Right ventricle myocardium inferior (tissue), 1 donor: ENCODE measurements at regions of chr1 and their contacts with region 1.

Region 1: DNA sequence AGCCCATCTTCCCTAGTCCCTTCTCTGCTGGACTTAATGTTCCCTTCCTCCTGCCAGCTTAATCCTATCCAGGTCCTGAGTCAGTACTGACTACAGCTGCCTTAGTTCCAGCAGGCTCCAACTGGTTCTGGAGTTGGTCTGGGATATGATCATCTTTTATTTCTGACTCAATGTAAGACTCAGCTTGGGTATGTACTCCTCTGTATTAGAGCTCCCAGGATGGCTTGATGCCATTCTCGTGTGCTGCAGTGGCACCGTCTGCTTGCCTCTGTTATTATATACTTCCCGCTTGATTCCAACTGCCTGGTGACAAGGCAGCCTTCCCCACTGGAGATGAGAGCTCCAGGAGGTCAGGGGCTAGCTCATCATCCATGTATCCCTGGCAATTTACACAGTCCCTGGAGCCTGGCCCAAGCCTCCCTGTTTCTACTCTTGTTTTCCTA is 164.4 kb upstream of the DPT start:
- DNase-seq: peak; percentile 67
- ATAC-seq: peak; percentile 97

Region 2: DNA sequence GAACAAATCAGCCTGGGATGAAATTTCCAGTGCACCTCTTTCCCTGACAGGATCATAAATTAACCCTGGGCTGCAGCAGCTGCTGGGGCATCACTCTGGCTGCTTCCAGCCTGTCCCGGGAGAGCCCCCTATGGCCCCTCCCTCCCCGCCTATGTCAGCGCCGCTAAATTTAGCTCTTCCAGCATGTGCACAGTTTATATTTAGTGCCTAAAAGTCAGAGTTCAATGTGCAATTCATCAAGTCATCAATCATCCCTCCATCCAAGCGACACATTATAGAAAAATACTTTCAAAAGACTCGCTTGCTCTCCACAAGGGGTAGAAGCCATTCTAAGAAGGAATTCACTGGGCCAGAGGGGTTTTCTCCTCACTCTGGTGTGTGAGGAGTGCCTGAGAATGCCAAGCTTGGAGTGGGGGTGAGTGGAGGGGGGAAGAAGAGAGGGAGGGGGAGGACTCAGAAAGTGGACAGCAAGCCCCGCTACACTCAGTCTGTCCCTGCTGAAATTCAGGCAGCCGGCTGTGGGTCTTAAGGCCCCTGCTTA is 279.6 kb before region 1 on chr1:
- intact Hi-C with region 1: no loop called
- DNase-seq: no peak
- ATAC-seq: peak; percentile 86

Region 3: GRCh38 chr1:168811176-168811575 is 82.2 kb before region 1 on chr1:
- intact Hi-C with region 1: no loop called
- DNase-seq: no peak
- ATAC-seq: no peak

Region 4: GRCh38 chr1:168972887-168973286 is 79.5 kb after region 1 on chr1:
- intact Hi-C with region 1: loop called (anchors 2 kb)
- DNase-seq: no peak
- ATAC-seq: no peak